ENCODE measurements at regions of chr1 and their contacts with region 1.

Region 1: GRCh38 chr1:81259625-81260411 is 540.9 kb upstream of the ADGRL2 start:
- DNase-seq: no peak
- ATAC-seq: no peak
- H3K4me3 ChIP-seq: no peak overlapping the region
- H3K27ac ChIP-seq: no peak overlapping the region
- H3K4me1 ChIP-seq: no peaks in the 10 kb centered on the region
- H3K27me3 ChIP-seq: no peaks in the 10 kb centered on the region; the same call in 1 of the 2 replicates
- CTCF ChIP-seq: no peak

Region 2: GRCh38 chr1:80258659-80259058 is 1001.2 kb before region 1 on chr1:
- CTCF ChIA-PET with region 1: no interaction called
- POLR2A ChIA-PET with region 1: interaction called, 11 read pairs
- in situ Hi-C with region 1: no loop called
- intact Hi-C with region 1: no loop called
- DNase-seq: no peak
- ATAC-seq: no peak
- H3K4me3 ChIP-seq: no peak overlapping the region
- H3K27ac ChIP-seq: no peak overlapping the region
- H3K4me1 ChIP-seq: no peaks in the 10 kb centered on the region
- H3K27me3 ChIP-seq: no peaks in the 10 kb centered on the region
- CTCF ChIP-seq: no peak

Region 3: GRCh38 chr1:81237473-81238089 is 22.2 kb before region 1 on chr1:
- CTCF ChIA-PET with region 1: no interaction called
- POLR2A ChIA-PET with region 1: no interaction called
- in situ Hi-C with region 1: no loop called
- intact Hi-C with region 1: no loop called
- DNase-seq: no peak
- ATAC-seq: no peak
- H3K4me3 ChIP-seq: peak overlapping the region; percentile 26 to 37
- H3K27ac ChIP-seq: no peak overlapping the region
- H3K4me1 ChIP-seq: no peaks in the 10 kb centered on the region
- H3K27me3 ChIP-seq: no peaks in the 10 kb centered on the region
- CTCF ChIP-seq: no peak

Region 4: GRCh38 chr1:81305997-81306452 is 46.2 kb after region 1 on chr1:
- CTCF ChIA-PET with region 1: no interaction called
- POLR2A ChIA-PET with region 1: interaction called, 12 read pairs
- in situ Hi-C with region 1: no loop called
- intact Hi-C with region 1: no loop called
- DNase-seq: peak; percentile 4
- ATAC-seq: peak; percentile 58; the same call in 1 of the 2 replicates
- H3K4me3 ChIP-seq: peak overlapping the region; percentile 35 to 38
- H3K27ac ChIP-seq: no peak overlapping the region
- H3K4me1 ChIP-seq: no peaks in the 10 kb centered on the region
- H3K27me3 ChIP-seq: no peaks in the 10 kb centered on the region
- CTCF ChIP-seq: peak; percentile 45